BJ (cell line): ENCODE measurements at regions of chr19 and their contacts with region 1.

Region 1: DNA sequence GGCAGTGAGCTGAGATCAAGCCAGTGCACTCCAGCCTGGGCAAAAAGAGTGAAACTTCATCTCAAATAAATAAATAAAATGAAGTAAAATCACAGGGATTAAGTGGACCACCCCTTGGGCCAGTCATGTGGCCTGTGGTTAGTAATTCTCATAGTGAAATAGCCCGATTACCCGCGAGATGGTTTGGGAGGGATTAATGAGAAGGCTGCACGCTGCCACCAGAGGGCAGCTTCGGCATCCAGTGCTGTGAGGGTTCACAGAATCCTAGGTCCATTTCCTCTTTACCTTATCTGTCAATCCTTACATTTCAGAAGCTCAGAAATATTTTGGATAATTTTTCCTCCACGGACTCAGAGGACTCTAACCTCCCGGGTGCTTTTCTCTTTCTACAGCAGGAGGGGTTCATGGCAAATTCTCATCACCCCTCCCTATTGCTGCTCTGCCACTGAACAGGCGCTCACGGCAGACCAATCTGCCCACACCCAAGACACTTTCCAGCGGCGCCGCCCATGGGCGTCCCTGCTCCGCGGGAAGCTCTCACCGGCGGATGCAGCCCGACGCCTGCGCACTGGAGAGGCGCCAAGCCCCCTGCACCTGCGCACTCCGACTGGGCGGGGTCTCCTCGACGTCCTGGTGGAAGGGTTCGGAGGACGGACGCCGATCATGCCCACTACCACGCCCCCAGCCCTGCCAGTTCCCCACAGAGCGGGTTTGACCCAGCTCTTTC is 11.0 kb downstream of the ZNF835 start:
- DNase-seq: no peak
- H3K4me3 ChIP-seq: no peak overlapping the region
- H3K27me3 ChIP-seq: no peaks in the 10 kb centered on the region
- CTCF ChIP-seq: no peak

Region 2: DNA sequence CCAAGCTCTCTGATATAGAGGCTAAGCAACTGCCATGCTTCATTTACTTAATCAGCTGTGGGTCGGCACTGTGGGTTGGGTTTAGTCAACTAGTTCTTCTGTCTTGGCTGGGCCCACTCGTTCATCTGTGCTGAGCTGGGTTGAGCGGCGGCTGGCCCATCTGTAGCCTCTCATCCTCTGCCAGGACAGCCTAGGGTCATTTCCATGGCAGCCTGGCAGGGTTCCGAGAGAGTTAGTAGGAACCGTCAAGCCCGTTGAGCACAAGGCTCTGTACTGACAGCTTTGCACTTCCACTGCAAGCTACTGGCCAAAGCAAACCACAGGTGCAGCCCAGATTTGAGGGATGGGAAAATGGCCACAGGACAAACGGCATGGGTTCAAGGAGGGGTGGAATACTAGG is 17.7 kb after region 1 on chr19:
- CTCF ChIA-PET with region 1: no interaction called
- POLR2A ChIA-PET with region 1: interaction called, 17 read pairs
- DNase-seq: no peak
- H3K4me3 ChIP-seq: no peak overlapping the region
- H3K27me3 ChIP-seq: no peaks in the 10 kb centered on the region
- CTCF ChIP-seq: no peak

Region 3: DNA sequence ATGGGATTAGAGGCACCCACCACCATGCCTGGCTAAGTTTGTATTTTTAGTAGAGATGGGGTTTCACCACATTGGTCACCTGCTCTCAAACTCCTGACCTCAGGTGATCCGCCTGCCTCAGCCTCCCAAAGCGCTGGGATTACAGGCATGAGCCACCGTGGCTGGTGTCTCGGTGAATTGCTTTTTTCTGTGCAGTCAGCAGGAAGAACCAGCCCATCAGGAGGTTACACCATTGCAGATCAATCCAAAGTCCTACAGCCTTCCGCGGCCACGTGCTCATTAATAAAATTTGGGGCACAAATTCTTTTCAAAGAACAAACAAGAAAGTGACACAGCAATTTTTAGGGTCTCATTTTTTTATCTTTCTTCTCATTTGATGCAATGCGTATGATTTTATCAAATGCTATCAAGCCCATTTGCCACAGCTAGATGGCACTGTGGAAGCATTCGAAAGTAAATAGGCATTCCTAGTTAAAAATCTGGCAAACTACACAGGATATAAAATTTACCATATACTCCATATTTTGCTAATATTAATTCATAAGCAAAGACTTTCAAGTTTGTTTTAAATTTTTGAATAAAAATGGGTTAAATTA is 65.4 kb after region 1 on chr19:
- CTCF ChIA-PET with region 1: no interaction called
- POLR2A ChIA-PET with region 1: no interaction called
- DNase-seq: no peak
- H3K4me3 ChIP-seq: no peak overlapping the region
- H3K27me3 ChIP-seq: no peaks in the 10 kb centered on the region
- CTCF ChIP-seq: no peak

Region 4: DNA sequence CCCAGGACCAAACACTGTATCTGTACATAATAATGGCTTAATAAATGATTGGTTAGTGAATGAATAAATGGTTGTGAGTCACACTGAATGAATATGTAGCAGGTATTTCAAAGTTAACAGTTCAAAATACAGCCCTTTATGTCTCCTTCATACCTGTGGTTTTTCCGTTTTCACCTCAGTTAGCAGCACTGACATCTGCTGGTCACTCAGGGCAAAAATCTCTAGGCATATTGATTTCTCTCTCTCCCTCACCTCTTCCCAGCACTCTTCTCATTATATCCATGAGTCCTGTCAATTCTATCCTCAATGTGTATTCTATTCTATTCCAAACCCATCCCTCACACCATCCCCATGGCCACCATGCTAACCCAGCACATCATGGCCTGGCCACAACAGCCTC is 103.8 kb after region 1 on chr19:
- CTCF ChIA-PET with region 1: no interaction called
- POLR2A ChIA-PET with region 1: no interaction called
- DNase-seq: no peak
- H3K4me3 ChIP-seq: no peak overlapping the region
- H3K27me3 ChIP-seq: no peaks in the 10 kb centered on the region
- CTCF ChIP-seq: no peak